ENCODE measurements at regions of chr6 and their contacts with region 1.

Region 1: GRCh38 chr6:109050012-109050411 is 44.6 kb downstream of the SESN1 start:
- DNase-seq: no peak
- H3K4me3 ChIP-seq: no peak overlapping the region
- H3K27ac ChIP-seq: peak overlapping the region in 1 of 8 donors; percentile 24
- H3K4me1 ChIP-seq: peaks cover 13 to 57% (median 35%) of the 10 kb centered on the region in 6 donors
- H3K27me3 ChIP-seq: no peaks in the 10 kb centered on the region
- CTCF ChIP-seq: no peak
- POLR2A ChIP-seq: no peak

Region 2: DNA sequence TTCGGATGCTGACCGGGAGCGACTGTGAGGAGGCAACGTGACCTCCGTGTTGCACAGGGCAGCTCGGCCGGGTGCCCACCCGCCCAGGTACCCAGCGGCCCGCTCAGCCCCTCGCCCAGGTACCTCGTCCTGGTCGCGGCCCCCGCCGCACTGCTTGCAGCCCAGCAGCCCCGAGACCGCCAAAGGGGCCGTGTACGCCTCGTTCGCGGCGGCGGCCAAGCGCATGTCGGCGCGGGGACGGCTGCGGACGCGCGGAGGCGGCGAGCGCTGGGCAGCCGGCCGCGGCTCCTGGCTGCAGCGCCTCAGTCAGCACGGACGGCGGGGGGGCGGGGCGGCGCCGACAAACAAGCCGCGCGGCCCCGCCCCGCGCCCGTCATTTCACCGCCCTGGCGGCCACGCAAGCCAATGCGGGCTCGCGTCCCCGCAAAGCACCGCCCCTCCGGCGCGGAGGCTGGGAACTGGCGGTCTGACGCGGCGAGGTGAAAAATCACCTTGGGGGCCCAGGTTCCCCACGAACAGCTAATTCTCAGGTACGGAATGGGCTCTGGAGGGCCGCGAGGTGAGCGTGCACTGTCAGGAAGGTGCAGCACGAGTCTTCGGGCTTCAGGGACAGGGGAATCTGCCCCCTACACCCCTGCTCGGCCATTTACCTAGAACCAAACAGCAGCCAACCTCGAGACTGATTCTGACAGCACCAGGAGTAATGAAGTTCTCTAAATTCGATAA is 40.6 kb before region 1 on chr6:
- intact Hi-C with region 1: loop called (anchors 5 kb)
- DNase-seq: peak; percentile 99
- H3K4me3 ChIP-seq: peak overlapping the region; percentile 62 to 87 (median 74)
- H3K27ac ChIP-seq: peak overlapping the region; percentile 91 to 97 (median 94)
- H3K4me1 ChIP-seq: peaks cover 21 to 92% (median 80%) of the 10 kb centered on the region in 6 donors
- H3K27me3 ChIP-seq: no peaks in the 10 kb centered on the region
- CTCF ChIP-seq: peak in 10 of 11 experiments; percentile 51 to 75 (median 65)
- POLR2A ChIP-seq: peak; percentile 64 to 86 (median 71)

Measured in spleen (tissue), 13 donors.